Activated CD4-positive, alpha-beta memory T cell treated with anti-CD3 and anti-CD28 coated beads, Interleukin-2, amount 10 ng/mL, durations not matched to agents 7 days and 5 days (primary cell): ENCODE measurements at regions of chr14 and their contacts with region 1.

Region 1: GRCh38 chr14:101767618-101768362 is 6.3 kb downstream of the PPP2R5C start:
- DNase-seq: no peak
- H3K4me3 Mint-ChIP-seq: no peak overlapping the region
- H3K27ac Mint-ChIP-seq: no peak overlapping the region
- H3K4me1 Mint-ChIP-seq: peaks cover 22% of the 10 kb centered on the region
- H3K27me3 Mint-ChIP-seq: no peaks in the 10 kb centered on the region

Region 2: DNA sequence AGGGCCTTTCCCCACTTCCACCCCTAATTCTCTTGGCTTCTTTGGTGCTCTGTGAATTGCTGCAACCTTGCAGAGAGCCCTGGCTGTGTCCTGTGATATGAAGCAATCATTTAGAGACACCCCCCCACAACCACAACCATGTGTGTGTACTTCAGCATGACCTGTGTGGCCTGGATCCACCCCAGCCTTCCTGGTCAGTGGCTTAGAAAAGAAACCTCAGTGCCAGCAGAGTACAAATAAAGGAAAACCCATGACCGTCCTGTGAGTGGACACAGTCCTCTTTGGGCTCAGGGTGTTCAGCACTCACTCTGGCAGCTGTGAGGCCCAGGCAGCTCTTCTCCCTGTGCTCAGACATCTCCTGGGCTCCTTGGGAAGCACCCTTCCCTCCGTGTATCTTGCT is 413.1 kb before region 1 on chr14:
- CTCF ChIA-PET with region 1: no interaction called
- POLR2A ChIA-PET with region 1: no interaction called
- DNase-seq: no peak
- H3K4me3 Mint-ChIP-seq: no peak overlapping the region
- H3K27ac Mint-ChIP-seq: no peak overlapping the region
- H3K4me1 Mint-ChIP-seq: no peaks in the 10 kb centered on the region
- H3K27me3 Mint-ChIP-seq: no peaks in the 10 kb centered on the region

Region 3: GRCh38 chr14:101721951-101722661 is 45.7 kb before region 1 on chr14:
- CTCF ChIA-PET with region 1: interaction called, 12 read pairs
- POLR2A ChIA-PET with region 1: interaction called, 8 read pairs
- DNase-seq: peak; percentile 89
- H3K4me3 Mint-ChIP-seq: peak overlapping the region; percentile 74
- H3K27ac Mint-ChIP-seq: peak overlapping the region; percentile 100
- H3K4me1 Mint-ChIP-seq: peaks cover 44% of the 10 kb centered on the region
- H3K27me3 Mint-ChIP-seq: no peaks in the 10 kb centered on the region

Region 4: GRCh38 chr14:101783260-101784016 is 15.6 kb after region 1 on chr14:
- CTCF ChIA-PET with region 1: interaction called, 10 read pairs
- POLR2A ChIA-PET with region 1: no interaction called
- DNase-seq: no peak
- H3K4me3 Mint-ChIP-seq: no peak overlapping the region
- H3K27ac Mint-ChIP-seq: no peak overlapping the region
- H3K4me1 Mint-ChIP-seq: peaks cover 8% of the 10 kb centered on the region
- H3K27me3 Mint-ChIP-seq: peaks cover 18% of the 10 kb centered on the region

Region 5: GRCh38 chr14:101791919-101792572 is 24.3 kb after region 1 on chr14:
- CTCF ChIA-PET with region 1: interaction called, 12 read pairs
- POLR2A ChIA-PET with region 1: interaction called, 4 read pairs
- DNase-seq: no peak
- H3K4me3 Mint-ChIP-seq: peak overlapping the region; percentile 47
- H3K27ac Mint-ChIP-seq: peak overlapping the region; percentile 41
- H3K4me1 Mint-ChIP-seq: peaks cover 21% of the 10 kb centered on the region
- H3K27me3 Mint-ChIP-seq: no peaks in the 10 kb centered on the region

Region 6: GRCh38 chr14:101834800-101835547 is 67.2 kb after region 1 on chr14:
- CTCF ChIA-PET with region 1: interaction called, 14 read pairs
- POLR2A ChIA-PET with region 1: no interaction called
- DNase-seq: no peak
- H3K4me3 Mint-ChIP-seq: no peak overlapping the region
- H3K27ac Mint-ChIP-seq: no peak overlapping the region
- H3K4me1 Mint-ChIP-seq: peaks cover 78% of the 10 kb centered on the region
- H3K27me3 Mint-ChIP-seq: no peaks in the 10 kb centered on the region

Region 7: DNA sequence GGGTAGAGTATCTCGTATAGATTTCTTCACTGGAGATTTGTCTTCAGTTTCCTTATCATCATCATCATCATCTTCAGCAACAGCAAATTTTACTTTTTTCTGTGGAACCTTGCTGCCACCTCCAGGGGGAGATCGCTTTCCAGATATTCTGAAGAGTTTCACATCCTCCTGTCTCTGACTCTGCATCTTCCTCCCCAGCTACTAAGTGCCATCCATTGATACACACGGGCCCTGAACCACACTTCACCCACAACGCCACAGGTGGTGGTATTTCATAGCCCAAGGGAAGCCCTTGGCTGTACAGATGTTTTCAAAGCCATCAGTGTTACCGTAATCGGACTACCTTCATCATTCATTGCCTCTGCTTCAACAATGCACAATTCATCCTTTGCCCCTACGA is 75.9 kb after region 1 on chr14:
- CTCF ChIA-PET with region 1: interaction called, 33 read pairs
- POLR2A ChIA-PET with region 1: interaction called, 12 read pairs
- DNase-seq: peak; percentile 70
- H3K4me3 Mint-ChIP-seq: no peak overlapping the region
- H3K27ac Mint-ChIP-seq: peak overlapping the region; percentile 37
- H3K4me1 Mint-ChIP-seq: peaks cover 88% of the 10 kb centered on the region
- H3K27me3 Mint-ChIP-seq: no peaks in the 10 kb centered on the region

Region 8: DNA sequence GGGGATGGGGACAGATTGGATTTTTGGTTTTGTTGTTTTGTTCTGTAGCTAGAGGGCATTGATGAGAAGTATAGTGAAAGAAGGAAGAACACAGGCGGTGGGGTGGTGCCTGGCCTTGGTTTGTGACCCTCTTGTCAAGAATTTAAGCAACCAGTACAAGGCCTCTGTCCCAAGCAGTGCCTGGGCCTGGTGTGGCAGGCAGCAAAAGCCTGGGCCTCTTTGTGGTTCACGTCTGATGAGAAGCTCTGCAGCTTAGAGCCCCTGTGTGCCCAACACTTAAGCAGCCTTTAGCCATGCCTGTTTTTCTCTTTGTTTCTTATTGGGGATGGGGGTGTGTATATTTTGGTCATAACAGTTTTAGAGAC is 91.7 kb after region 1 on chr14:
- CTCF ChIA-PET with region 1: no interaction called
- POLR2A ChIA-PET with region 1: no interaction called
- DNase-seq: no peak
- H3K4me3 Mint-ChIP-seq: no peak overlapping the region
- H3K27ac Mint-ChIP-seq: peak overlapping the region; percentile 67
- H3K4me1 Mint-ChIP-seq: peaks cover 50% of the 10 kb centered on the region
- H3K27me3 Mint-ChIP-seq: no peaks in the 10 kb centered on the region

Region 9: DNA sequence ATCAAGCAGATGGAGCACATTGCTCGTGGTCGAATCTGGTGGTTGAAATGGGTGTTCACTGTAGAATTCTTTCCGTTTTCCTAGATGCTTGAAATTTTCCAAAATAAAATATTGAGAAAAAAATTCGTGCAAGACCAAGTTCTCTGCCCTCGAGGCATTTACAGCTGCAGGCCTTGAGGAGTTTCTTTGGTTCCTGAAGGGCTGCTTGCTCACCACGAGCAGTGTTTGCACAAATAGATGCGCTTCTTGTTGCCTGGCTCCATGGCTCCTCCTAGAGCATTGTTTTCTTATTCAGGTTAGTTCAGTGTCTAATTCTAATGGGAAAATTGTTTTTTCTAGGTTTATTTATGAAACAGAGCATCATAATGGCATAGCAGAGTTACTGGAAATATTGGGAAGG is 122.1 kb after region 1 on chr14:
- CTCF ChIA-PET with region 1: interaction called, 10 read pairs
- POLR2A ChIA-PET with region 1: no interaction called
- DNase-seq: no peak
- H3K4me3 Mint-ChIP-seq: no peak overlapping the region
- H3K27ac Mint-ChIP-seq: no peak overlapping the region
- H3K4me1 Mint-ChIP-seq: no peaks in the 10 kb centered on the region
- H3K27me3 Mint-ChIP-seq: no peaks in the 10 kb centered on the region